Heart right ventricle (tissue), 16 donors: ENCODE measurements at regions of chr7 and their contacts with region 1.

Region 1: GRCh38 chr7:135745703-135746312 is 2.8 kb downstream of the FAM180A start:
- DNase-seq: peak in 1 of 2 donors; percentile 76
- ATAC-seq: peak in 7 of 8 donors; percentile 33 to 77 (median 57)
- H3K4me3 ChIP-seq: peak overlapping the region in 3 of 10 donors; percentile 2 to 52 (median 43)
- H3K27ac ChIP-seq: peak overlapping the region in 6 of 10 donors; percentile 62 to 91 (median 76)
- H3K4me1 ChIP-seq: peaks cover 7 to 62% (median 20%) of the 10 kb centered on the region in 9 donors
- H3K27me3 ChIP-seq: no peaks in the 10 kb centered on the region
- CTCF ChIP-seq: no peak

Region 2: DNA sequence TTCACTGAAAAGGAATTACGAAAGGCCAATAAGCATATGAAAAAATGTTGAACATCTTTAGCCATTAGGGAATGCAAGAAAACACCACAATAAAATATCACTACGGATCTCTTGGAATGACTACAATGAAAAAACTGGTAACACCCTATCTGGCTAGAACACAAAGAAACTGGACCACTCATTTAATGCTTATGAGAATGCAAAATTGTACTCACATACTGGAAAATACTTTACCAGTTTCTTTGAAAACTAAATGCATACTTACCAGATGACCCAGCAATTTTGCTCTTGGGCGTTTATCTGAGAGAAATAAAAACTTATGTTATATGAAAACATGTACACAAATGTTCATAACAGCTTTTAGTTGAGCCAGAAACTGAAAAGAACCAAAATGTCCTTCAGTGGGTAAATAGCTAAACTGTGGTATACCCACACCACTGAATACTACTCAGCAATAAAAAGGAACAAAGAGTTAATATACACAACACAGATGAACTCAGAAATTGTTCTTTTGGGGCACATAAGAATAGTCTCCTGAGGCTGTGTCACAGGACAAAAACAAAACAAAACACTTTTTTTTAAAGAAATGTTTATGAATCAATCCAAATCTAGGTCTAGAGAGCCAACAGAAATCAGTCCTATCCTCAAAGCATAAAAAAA is 259.4 kb before region 1 on chr7:
- intact Hi-C with region 1: loop called in 1 of 10 experiments (anchors 5 kb)
- DNase-seq: no peak
- ATAC-seq: no peak
- H3K4me3 ChIP-seq: no peak overlapping the region
- H3K27ac ChIP-seq: no peak overlapping the region
- H3K4me1 ChIP-seq: peaks cover 0 to 32% (median 12%) of the 10 kb centered on the region in 9 donors
- H3K27me3 ChIP-seq: no peaks in the 10 kb centered on the region
- CTCF ChIP-seq: no peak